K562 (cell line): ENCODE measurements at regions of chr1 and their contacts with region 1.

Region 1: GRCh38 chr1:53393325-53393792 is 65.5 kb upstream of the LRP8 start:
- DNase-seq: peak; percentile 84 to 87 (median 86)
- ATAC-seq: peak; percentile 91
- H3K4me3 ChIP-seq: no peak overlapping the region
- H3K27ac ChIP-seq: no peak overlapping the region
- H3K4me1 ChIP-seq: 0 out of 5 replicates have a peak, but pooled peaks cover 0 to 3% of the 10 kb centered on the region in 2 experiments
- H3K27me3 ChIP-seq: peaks cover 21 to 46% of the 10 kb centered on the region in 2 experiments
- CTCF ChIP-seq: peak; percentile 92 to 97 (median 97)
- EP300 ChIP-seq: no peak
- POLR2A ChIP-seq: no peak
- RAD21 ChIP-seq: peak; percentile 96 to 99

Region 2: GRCh38 chr1:53196485-53197270 is 196.7 kb before region 1 on chr1 and contains the start of gene CPT2:
- CTCF ChIA-PET with region 1: no interaction called
- POLR2A ChIA-PET with region 1: no interaction called
- in situ Hi-C with region 1: no loop called
- intact Hi-C with region 1: loop called (anchors 10 kb)
- DNase-seq: peak; percentile 98 to 100 (median 100)
- ATAC-seq: peak; percentile 99
- H3K4me3 ChIP-seq: peak within 1 kb of the TSS; percentile 94
- H3K27ac ChIP-seq: peak within 1 kb of the TSS; percentile 90
- H3K4me1 ChIP-seq: peaks cover 16 to 21% of the 10 kb centered on the region in 2 experiments
- H3K27me3 ChIP-seq: no peaks in the 10 kb centered on the region
- CTCF ChIP-seq: peak in 1 of 3 experiments; percentile 22; a peak in 2 of 6 replicates
- EP300 ChIP-seq: peak; percentile 14; the same call in 1 of the 2 replicates
- POLR2A ChIP-seq: peak; percentile 95
- RAD21 ChIP-seq: peak in 1 of 2 experiments; percentile 4; a peak in 1 of 4 replicates
- polyA plus RNA-seq, gene CPT2: 7.6 to 7.9 TPM

Region 3: GRCh38 chr1:53278201-53278725 is 115.1 kb before region 1 on chr1:
- CTCF ChIA-PET with region 1: interaction called, 123 read pairs
- POLR2A ChIA-PET with region 1: interaction called, 3 read pairs
- in situ Hi-C with region 1: loop called (anchors 5 kb)
- intact Hi-C with region 1: loop called (anchors 1 kb)
- DNase-seq: peak; percentile 62 to 84 (median 81)
- ATAC-seq: peak; percentile 89
- H3K4me3 ChIP-seq: no peak overlapping the region
- H3K27ac ChIP-seq: no peak overlapping the region
- H3K4me1 ChIP-seq: peaks cover 6% of the 10 kb centered on the region in 2 experiments; a peak in 2 of 5 replicates
- H3K27me3 ChIP-seq: no peaks in the 10 kb centered on the region
- CTCF ChIP-seq: peak; percentile 79 to 95 (median 94)
- EP300 ChIP-seq: 0 out of 2 replicates have a peak, but pooled peaks have one; percentile 5
- POLR2A ChIP-seq: no peak
- RAD21 ChIP-seq: peak; percentile 96 to 97

Region 4: GRCh38 chr1:53294567-53294966 is 98.8 kb before region 1 on chr1:
- CTCF ChIA-PET with region 1: interaction called, 3 read pairs
- POLR2A ChIA-PET with region 1: interaction called, 3 read pairs
- in situ Hi-C with region 1: no loop called
- intact Hi-C with region 1: loop called (anchors 1 kb)
- DNase-seq: peak in 1 of 4 experiments; percentile 42
- ATAC-seq: peak; percentile 13
- H3K4me3 ChIP-seq: no peak overlapping the region
- H3K27ac ChIP-seq: no peak overlapping the region
- H3K4me1 ChIP-seq: peaks cover 7 to 35% of the 10 kb centered on the region in 2 experiments; a peak in 3 of 5 replicates
- H3K27me3 ChIP-seq: no peaks in the 10 kb centered on the region
- CTCF ChIP-seq: no peak
- EP300 ChIP-seq: no peak
- POLR2A ChIP-seq: no peak
- RAD21 ChIP-seq: no peak

Region 5: DNA sequence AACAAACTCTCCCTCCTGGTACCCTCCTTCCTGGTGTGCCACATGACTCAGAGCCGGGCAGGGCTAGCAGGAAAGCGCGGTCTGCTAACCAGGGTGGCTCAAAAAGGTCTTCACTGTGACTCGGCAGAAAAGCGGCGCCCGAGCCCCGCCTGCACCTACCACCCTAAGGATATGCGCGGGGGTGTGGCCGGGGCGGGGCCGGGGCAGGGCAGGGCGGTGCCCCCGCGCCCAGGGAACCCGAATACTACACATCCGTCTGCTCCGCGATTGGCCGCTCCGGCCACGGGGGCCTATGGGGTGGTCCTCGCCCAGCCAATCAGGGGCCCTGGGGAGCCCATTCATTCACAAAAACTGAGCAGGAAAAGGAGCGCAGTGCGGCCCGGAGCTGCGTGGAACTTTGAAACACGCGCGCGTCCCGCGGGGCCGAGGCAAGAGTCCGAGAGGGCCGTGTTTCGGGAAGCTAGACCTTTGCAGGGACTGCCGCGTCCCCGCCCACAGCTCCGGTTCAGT is 67.2 kb before region 1 on chr1:
- CTCF ChIA-PET with region 1: interaction called, 3 read pairs
- POLR2A ChIA-PET with region 1: interaction called, 3 read pairs
- in situ Hi-C with region 1: no loop called
- intact Hi-C with region 1: loop called (anchors 2 kb)
- DNase-seq: peak; percentile 99
- ATAC-seq: peak; percentile 93
- H3K4me3 ChIP-seq: peak overlapping the region; percentile 86
- H3K27ac ChIP-seq: peak overlapping the region; percentile 92
- H3K4me1 ChIP-seq: peaks cover 14 to 42% of the 10 kb centered on the region in 2 experiments
- H3K27me3 ChIP-seq: peaks cover 2 to 3% of the 10 kb centered on the region in 2 experiments; a peak in 1 of 5 replicates
- CTCF ChIP-seq: no peak
- EP300 ChIP-seq: peak; percentile 65; the same call in 1 of the 2 replicates
- POLR2A ChIP-seq: peak; percentile 98
- RAD21 ChIP-seq: no peak